Heart left ventricle (tissue), 16 donors: ENCODE measurements at regions of chr6 and their contacts with region 1.

Region 1: GRCh38 chr6:163585932-163586437 is 171.5 kb downstream of the QKI start:
- DNase-seq: peak; percentile 54 to 82 (median 72)
- ATAC-seq: peak; percentile 47 to 88 (median 82)
- H3K4me3 ChIP-seq: peak overlapping the region in 1 of 12 donors; percentile 15
- H3K27ac ChIP-seq: peak overlapping the region in 9 of 12 donors; percentile 12 to 64 (median 39)
- H3K4me1 ChIP-seq: peaks cover 2 to 42% (median 19%) of the 10 kb centered on the region in 12 donors
- H3K27me3 ChIP-seq: no peaks in the 10 kb centered on the region
- CTCF ChIP-seq: no peak
- POLR2A ChIP-seq: no peak

Region 2: GRCh38 chr6:163338671-163339405 is 247.1 kb before region 1 on chr6:
- intact Hi-C with region 1: loop called in 1 of 10 experiments (anchors 10 kb)
- DNase-seq: peak; percentile 66 to 74 (median 70)
- ATAC-seq: peak; percentile 62 to 73 (median 68)
- H3K4me3 ChIP-seq: no peak overlapping the region
- H3K27ac ChIP-seq: peak overlapping the region; percentile 71 to 97 (median 90)
- H3K4me1 ChIP-seq: peaks cover 10 to 74% (median 59%) of the 10 kb centered on the region in 12 donors
- H3K27me3 ChIP-seq: no peaks in the 10 kb centered on the region
- CTCF ChIP-seq: no peak
- POLR2A ChIP-seq: no peak

Region 3: DNA sequence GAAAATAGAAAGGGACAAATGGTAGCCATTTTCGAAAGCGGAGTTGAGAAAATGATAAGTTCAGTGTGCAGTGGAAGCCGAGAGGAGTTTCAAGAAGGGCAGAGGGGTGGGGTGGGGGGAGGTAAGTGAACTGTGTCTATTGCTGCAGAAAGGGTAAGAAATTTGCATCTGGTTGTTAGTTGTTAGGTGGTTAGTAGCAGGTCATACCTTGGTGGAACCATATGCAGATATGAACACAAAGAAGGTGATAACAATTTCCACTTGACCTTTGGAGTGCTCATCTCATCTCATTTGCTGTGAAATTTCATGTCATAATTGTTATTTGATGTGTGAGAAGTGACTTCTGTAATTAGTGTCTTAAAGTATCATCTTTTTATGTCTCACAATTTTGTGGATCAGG is 116.8 kb after region 1 on chr6:
- intact Hi-C with region 1: loop called in 2 of 10 experiments (anchors 5 kb)
- DNase-seq: no peak
- ATAC-seq: no peak
- H3K4me3 ChIP-seq: no peak overlapping the region
- H3K27ac ChIP-seq: no peak overlapping the region
- H3K4me1 ChIP-seq: peaks cover 0 to 27% (median 19%) of the 10 kb centered on the region in 12 donors
- H3K27me3 ChIP-seq: no peaks in the 10 kb centered on the region
- CTCF ChIP-seq: no peak
- POLR2A ChIP-seq: no peak

Region 4: DNA sequence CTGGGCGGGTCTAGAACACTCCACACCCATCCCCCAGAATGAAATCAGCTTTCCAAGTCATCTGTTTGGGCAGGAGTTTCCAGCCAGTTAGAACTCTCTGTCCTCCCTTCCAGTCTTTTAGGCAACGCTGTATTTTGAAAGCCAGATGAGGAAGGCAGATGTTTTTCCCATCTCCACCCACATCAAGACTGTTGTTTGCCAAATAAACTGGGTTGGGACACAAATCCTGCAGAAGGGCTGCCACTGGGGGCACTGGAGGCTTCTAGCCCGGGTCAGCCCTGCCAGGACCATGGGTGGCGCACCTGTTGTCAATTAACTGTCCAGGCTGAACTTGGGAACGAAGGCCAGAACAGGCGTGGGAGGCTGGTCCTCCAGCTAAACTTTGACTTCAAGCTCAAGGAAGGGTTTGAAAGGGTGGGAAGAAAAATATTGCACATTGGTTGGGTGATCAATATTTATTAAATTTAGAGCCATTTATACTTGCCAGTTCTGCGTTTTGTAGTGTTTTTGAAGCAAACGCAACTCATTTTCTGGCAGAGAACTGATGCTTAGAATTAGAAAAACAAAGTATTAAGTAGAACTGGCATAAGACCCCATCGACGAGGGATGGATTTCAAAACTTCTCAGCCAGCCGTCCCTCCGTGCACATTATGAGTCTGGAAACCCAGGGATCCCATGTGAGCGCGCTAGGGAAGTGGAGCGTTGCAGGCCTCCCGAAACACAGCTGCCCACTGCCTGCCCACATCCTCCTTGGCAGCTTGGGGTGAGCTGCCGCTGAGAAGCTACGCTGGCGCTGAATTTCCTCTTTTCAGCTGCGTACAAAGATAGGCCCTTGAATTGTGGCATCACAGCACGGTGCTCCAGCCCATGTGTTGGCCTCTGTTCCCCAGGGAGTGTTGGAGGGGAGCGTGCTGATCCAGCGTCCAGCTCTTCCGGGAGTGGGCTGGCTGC is 125.9 kb after region 1 on chr6:
- intact Hi-C with region 1: loop called in 1 of 10 experiments (anchors 5 kb)
- DNase-seq: peak; percentile 80 to 91 (median 84)
- ATAC-seq: peak; percentile 71 to 80 (median 77)
- H3K4me3 ChIP-seq: peak overlapping the region in 1 of 12 donors; percentile 12
- H3K27ac ChIP-seq: peak overlapping the region; percentile 67 to 88 (median 78)
- H3K4me1 ChIP-seq: peaks cover 24 to 63% (median 61%) of the 10 kb centered on the region in 12 donors
- H3K27me3 ChIP-seq: no peaks in the 10 kb centered on the region
- CTCF ChIP-seq: peak in 11 of 12 donors; percentile 20 to 59 (median 41)
- POLR2A ChIP-seq: no peak

Region 5: GRCh38 chr6:163745536-163746400 is 159.8 kb after region 1 on chr6:
- intact Hi-C with region 1: loop called in 1 of 10 experiments (anchors 10 kb)
- DNase-seq: peak in 4 of 5 donors; percentile 70 to 89 (median 84)
- ATAC-seq: peak; percentile 94 to 96 (median 95)
- H3K4me3 ChIP-seq: no peak overlapping the region
- H3K27ac ChIP-seq: peak overlapping the region; percentile 32 to 85 (median 78)
- H3K4me1 ChIP-seq: peaks cover 0 to 53% (median 19%) of the 10 kb centered on the region in 12 donors
- H3K27me3 ChIP-seq: no peaks in the 10 kb centered on the region
- CTCF ChIP-seq: no peak
- POLR2A ChIP-seq: no peak

Region 6: DNA sequence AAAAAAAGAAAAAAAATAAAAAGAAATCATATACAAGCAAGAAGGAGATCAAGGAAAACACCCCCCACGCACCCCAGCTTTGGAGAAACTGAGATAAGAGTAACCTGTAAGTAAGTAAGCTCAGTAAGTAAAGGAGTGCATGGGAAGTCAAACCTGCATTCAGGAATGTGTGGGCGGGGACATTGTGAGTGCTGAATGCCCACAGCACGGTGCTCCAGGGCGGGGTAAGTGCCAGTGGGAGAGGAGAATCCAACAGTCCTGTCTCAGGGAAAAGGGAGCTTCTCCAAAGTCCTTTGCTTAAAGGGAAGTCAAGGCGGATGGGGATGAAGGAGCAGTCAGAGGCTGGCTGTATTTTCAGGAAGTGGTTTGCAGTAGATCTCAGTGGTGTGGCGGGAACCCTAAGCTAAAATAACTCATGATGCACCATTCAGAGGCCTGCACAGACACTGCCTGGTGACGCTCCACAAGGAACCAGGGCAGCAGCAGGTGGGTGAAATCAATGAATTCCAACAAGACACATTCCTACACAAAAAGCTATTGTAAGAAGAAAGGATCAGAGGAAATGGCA is 196.5 kb after region 1 on chr6:
- intact Hi-C with region 1: loop called in 1 of 10 experiments (anchors 10 kb)
- DNase-seq: peak in 1 of 5 donors; percentile 26
- ATAC-seq: peak in 3 of 4 donors; percentile 38 to 57 (median 43)
- H3K4me3 ChIP-seq: no peak overlapping the region
- H3K27ac ChIP-seq: no peak overlapping the region
- H3K4me1 ChIP-seq: peaks cover 0 to 20% (median 4%) of the 10 kb centered on the region in 12 donors
- H3K27me3 ChIP-seq: no peaks in the 10 kb centered on the region
- CTCF ChIP-seq: no peak
- POLR2A ChIP-seq: no peak